ENCODE measurements at regions of chr9 and their contacts with region 1.

Region 1: GRCh38 chr9:124110307-124110915 is 98.8 kb downstream of the LHX2 start:
- DNase-seq: peak; percentile 66 to 73 (median 68)
- ATAC-seq: peak; percentile 83
- H3K4me3 ChIP-seq: no peak overlapping the region
- H3K27ac ChIP-seq: no peak overlapping the region
- H3K4me1 ChIP-seq: no peaks in the 10 kb centered on the region
- H3K27me3 ChIP-seq: peaks cover 6 to 10% of the 10 kb centered on the region in 2 experiments; a peak in 3 of 5 replicates
- CTCF ChIP-seq: no peak
- EP300 ChIP-seq: no peak
- POLR2A ChIP-seq: no peak
- RAD21 ChIP-seq: no peak; a peak in 1 of 4 replicates

Region 2: DNA sequence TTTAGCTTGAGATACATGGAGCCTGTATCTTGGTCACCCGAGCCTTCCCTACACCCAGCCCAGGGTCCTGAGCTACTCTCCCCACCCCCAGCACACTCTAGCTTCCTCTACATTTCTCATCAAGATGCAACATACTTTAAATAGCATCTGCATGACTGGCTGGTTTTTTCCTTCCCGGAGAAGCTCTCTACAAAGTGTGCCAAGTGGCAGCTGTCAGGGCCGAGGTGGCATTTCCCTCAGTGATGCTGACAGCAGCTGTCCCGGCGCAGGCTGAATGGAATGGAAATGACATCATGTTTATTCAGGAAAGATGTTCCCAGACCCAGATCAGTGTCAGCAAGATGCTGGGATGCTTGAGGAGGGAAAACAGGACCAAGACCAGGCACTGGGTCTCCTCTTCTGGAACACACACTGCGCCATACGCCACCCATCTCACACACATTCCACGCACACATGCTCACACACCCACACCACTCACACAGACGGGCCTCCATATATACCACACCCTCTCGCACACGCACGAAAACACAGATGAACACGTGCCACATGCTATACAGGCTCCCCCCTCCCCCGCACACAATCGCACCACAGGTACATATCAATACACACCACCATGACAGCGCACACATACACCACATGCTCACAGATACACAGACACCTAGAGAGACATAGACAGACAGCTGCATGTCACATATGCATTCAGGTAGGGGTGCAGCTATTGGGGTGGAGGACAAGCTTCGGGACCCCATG is 31.1 kb before region 1 on chr9:
- CTCF ChIA-PET with region 1: no interaction called
- POLR2A ChIA-PET with region 1: no interaction called
- in situ Hi-C with region 1: no loop called
- intact Hi-C with region 1: no loop called
- DNase-seq: no peak
- ATAC-seq: no peak
- H3K4me3 ChIP-seq: no peak overlapping the region
- H3K27ac ChIP-seq: no peak overlapping the region
- H3K4me1 ChIP-seq: no peaks in the 10 kb centered on the region; a peak in 1 of 5 replicates
- H3K27me3 ChIP-seq: peaks cover 12 to 27% of the 10 kb centered on the region in 2 experiments; a peak in 4 of 5 replicates
- CTCF ChIP-seq: no peak
- EP300 ChIP-seq: no peak
- POLR2A ChIP-seq: no peak
- RAD21 ChIP-seq: no peak

Region 3: GRCh38 chr9:124174433-124174832 is 64.0 kb after region 1 on chr9:
- CTCF ChIA-PET with region 1: no interaction called
- POLR2A ChIA-PET with region 1: no interaction called
- in situ Hi-C with region 1: no loop called
- intact Hi-C with region 1: no loop called
- DNase-seq: no peak
- ATAC-seq: no peak
- H3K4me3 ChIP-seq: no peak overlapping the region
- H3K27ac ChIP-seq: no peak overlapping the region
- H3K4me1 ChIP-seq: no peaks in the 10 kb centered on the region
- H3K27me3 ChIP-seq: peaks cover 9 to 23% of the 10 kb centered on the region in 2 experiments; a peak in 4 of 5 replicates
- CTCF ChIP-seq: no peak
- EP300 ChIP-seq: no peak
- POLR2A ChIP-seq: no peak
- RAD21 ChIP-seq: no peak

Region 4: DNA sequence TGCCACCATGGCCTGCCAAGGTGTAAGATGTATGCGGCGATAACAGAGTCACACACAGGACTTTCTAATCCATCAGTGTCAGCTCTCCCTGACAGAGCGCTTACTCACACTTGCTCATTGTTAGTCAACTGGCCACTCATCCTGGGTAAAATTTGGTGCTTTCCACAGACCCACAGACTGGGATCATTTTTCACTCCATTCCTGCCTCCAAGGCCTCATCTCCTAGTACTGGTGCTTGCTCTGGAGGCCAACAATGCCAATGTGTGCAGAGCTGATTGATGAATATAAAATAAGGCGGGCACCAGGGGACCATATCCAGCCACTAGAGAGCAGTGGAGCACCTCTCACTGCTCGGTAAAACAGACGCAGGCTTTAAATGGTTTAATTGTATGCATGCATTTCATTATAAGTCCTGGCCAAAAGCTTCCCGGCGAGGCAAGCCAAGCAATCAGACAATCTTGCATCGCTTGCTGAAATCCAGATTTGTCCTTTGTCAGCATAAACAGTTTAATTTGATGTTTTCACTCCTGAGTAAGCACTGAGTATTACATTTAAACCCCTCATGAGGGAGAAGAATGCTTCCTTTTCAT is 282.6 kb after region 1 on chr9:
- CTCF ChIA-PET with region 1: no interaction called
- POLR2A ChIA-PET with region 1: no interaction called
- in situ Hi-C with region 1: no loop called
- intact Hi-C with region 1: no loop called
- DNase-seq: peak; percentile 47 to 66 (median 52)
- ATAC-seq: peak; percentile 73
- H3K4me3 ChIP-seq: no peak overlapping the region
- H3K27ac ChIP-seq: peak overlapping the region; percentile 16; the same call in 2 of the 3 replicates
- H3K4me1 ChIP-seq: peaks cover 31 to 57% of the 10 kb centered on the region in 2 experiments
- H3K27me3 ChIP-seq: no peaks in the 10 kb centered on the region
- CTCF ChIP-seq: peak; percentile 55 to 77 (median 73)
- EP300 ChIP-seq: no peak; the same call in 1 of the 2 replicates
- POLR2A ChIP-seq: no peak
- RAD21 ChIP-seq: peak; percentile 15 to 42

Region 5: DNA sequence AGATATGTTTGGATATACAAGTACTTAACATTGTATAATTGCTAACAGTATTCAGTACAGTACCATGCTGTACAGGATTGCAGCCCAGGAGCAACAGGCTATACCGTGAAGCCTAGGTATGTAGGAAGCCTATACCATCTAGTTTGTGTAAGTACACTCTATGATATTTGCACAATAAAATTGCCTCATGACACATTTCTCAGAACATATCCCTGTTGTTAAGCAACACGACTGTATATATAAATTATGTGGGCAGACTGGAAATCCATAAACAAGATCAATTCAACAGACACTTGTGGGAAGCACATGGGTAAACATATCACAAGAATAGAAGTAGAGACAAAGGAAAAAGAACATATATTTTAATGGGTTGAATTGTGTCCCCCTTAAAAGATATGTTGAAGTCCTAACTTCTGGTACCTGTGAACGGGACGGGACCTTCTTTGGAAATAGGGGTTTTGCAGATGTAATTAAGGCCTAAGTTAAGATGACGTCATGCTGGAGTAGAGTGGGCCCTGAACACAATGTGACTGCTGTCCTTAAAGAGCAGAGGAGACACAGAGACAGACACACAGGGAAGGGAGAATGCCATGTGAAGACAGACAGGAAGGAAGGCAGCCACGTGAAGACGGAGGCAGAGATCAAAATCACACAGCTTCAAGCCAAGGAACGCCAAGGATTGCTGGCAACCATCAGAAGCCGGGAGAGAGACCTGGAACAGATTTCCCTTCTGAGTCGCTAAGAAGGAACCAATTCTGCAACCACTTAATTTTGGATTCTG is 956.6 kb after region 1 on chr9:
- CTCF ChIA-PET with region 1: no interaction called
- POLR2A ChIA-PET with region 1: no interaction called
- in situ Hi-C with region 1: loop called (anchors 25 kb)
- intact Hi-C with region 1: no loop called
- DNase-seq: no peak
- ATAC-seq: peak; percentile 60
- H3K4me3 ChIP-seq: no peak overlapping the region
- H3K27ac ChIP-seq: no peak overlapping the region
- H3K4me1 ChIP-seq: no peaks in the 10 kb centered on the region
- H3K27me3 ChIP-seq: no peaks in the 10 kb centered on the region
- CTCF ChIP-seq: no peak
- EP300 ChIP-seq: no peak
- POLR2A ChIP-seq: no peak
- RAD21 ChIP-seq: no peak